Uterus (tissue), 4 donors: ENCODE measurements at regions of chr2 and their contacts with region 1.

Region 1: DNA sequence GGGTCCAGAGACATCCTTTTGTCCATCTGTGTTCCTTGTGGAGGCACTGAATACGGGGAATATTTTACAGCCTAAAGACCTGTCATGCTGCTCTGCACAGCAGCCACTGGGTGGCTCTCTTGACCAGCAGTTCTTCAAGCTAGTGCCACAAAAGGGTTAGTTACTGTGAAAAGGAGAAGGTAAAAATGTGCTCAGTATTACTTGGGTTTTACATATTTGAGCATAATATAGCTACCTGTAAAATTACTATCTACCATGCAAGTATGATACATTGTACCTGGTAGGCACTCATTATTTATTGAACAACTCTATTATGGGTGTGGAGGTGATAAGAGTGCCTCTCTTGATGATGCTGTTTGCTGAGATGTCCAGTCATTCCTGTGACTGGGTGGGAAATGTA is 23.6 kb downstream of the FZD5 start:
- DNase-seq: peak; percentile 30 to 39
- H3K4me3 ChIP-seq: no peak overlapping the region
- H3K27ac ChIP-seq: no peak overlapping the region
- H3K4me1 ChIP-seq: no peaks in the 10 kb centered on the region
- H3K27me3 ChIP-seq: no peaks in the 10 kb centered on the region
- CTCF ChIP-seq: peak; percentile 83 to 87 (median 84)
- POLR2A ChIP-seq: no peak

Region 2: DNA sequence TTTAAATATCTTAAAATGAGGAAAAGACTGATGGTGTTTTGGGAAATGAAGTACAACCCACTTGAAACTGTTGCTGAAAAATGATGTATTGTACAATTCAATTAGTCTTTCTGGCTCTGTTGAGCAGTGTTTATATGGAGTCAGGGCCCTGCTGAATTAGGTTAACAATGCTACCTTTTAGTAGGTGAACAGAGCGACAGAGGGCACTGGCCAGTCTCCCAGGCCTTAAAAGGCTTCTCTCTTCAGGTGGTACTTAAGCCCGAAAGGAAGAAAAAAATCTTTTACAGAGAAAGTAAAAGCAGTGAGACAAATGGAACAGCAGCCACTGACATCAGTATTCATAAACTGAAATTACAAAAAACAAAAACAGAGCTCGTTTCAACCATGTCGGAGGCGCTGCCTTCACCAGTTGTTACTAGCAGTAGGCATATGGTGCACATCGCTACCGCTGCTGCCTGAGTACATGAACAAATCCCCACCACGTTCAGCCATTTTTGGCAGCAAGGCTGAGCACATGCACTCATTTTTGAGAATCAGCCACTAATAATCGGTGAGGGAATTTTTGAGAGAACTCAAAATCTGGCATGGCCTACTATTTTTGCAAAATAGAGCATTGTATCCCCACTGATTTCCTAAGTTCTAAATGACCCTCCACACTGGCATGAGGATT is 187.4 kb after region 1 on chr2:
- intact Hi-C with region 1: no loop called
- DNase-seq: no peak
- H3K4me3 ChIP-seq: no peak overlapping the region
- H3K27ac ChIP-seq: no peak overlapping the region
- H3K4me1 ChIP-seq: no peaks in the 10 kb centered on the region
- H3K27me3 ChIP-seq: no peaks in the 10 kb centered on the region
- CTCF ChIP-seq: no peak
- POLR2A ChIP-seq: no peak

Region 3: GRCh38 chr2:208072250-208072892 is 326.2 kb after region 1 on chr2:
- intact Hi-C with region 1: loop called (anchors 5 kb)
- DNase-seq: peak; percentile 48 to 53
- H3K4me3 ChIP-seq: no peak overlapping the region
- H3K27ac ChIP-seq: no peak overlapping the region
- H3K4me1 ChIP-seq: no peaks in the 10 kb centered on the region
- H3K27me3 ChIP-seq: no peaks in the 10 kb centered on the region
- CTCF ChIP-seq: peak; percentile 50 to 80 (median 70)
- POLR2A ChIP-seq: no peak